ENCODE measurements at regions of chr2 and their contacts with region 1.

Region 1: GRCh38 chr2:3728104-3729054 is 25.0 kb downstream of the DCDC2C start:
- DNase-seq: no peak
- H3K4me3 Mint-ChIP-seq: no peak overlapping the region
- H3K27ac Mint-ChIP-seq: no peak overlapping the region
- H3K4me1 Mint-ChIP-seq: peaks cover 6% of the 10 kb centered on the region
- H3K27me3 Mint-ChIP-seq: peaks cover 3% of the 10 kb centered on the region

Region 2: GRCh38 chr2:3780477-3781402 is 52.4 kb after region 1 on chr2:
- intact Hi-C with region 1: loop called (anchors 1 kb)
- DNase-seq: peak; percentile 54
- H3K4me3 Mint-ChIP-seq: peak overlapping the region; percentile 5
- H3K27ac Mint-ChIP-seq: peak overlapping the region; percentile 67
- H3K4me1 Mint-ChIP-seq: peaks cover 8% of the 10 kb centered on the region
- H3K27me3 Mint-ChIP-seq: peaks cover 15% of the 10 kb centered on the region

Measured in activated T-helper 1 cell treated with anti-CD3 and anti-CD28 coated beads, Interleukin-12 subunit alpha, Interleukin-12 subunit beta, Interleukin-2, Interleukin-4 antibody, amounts not matched to agents 30 ng/mL and 10 ng/mL and 1 ng/mL, durations not matched to agents 14 hours and 24 hours and 36 hours (primary cell).